CD8-positive, alpha-beta T cell (primary cell): ENCODE measurements at regions of chr2 and their contacts with region 1.

Region 1: GRCh38 chr2:152717228-152718075 is at the start of gene PRPF40A:
- DNase-seq: peak; percentile 97 to 99 (median 99)
- ATAC-seq: peak; percentile 79
- H3K4me3 ChIP-seq: peak within 1 kb of the TSS; percentile 85 to 95
- H3K4me3 Mint-ChIP-seq: peak within 1 kb of the TSS; percentile 100
- H3K27ac ChIP-seq: peak within 1 kb of the TSS; percentile 95 to 99
- H3K27ac Mint-ChIP-seq: peak within 1 kb of the TSS; percentile 100
- H3K4me1 ChIP-seq: peaks cover 22% of the 10 kb centered on the region
- H3K4me1 Mint-ChIP-seq: peaks cover 59% of the 10 kb centered on the region
- H3K27me3 ChIP-seq: no peaks in the 10 kb centered on the region
- H3K27me3 Mint-ChIP-seq: no peaks in the 10 kb centered on the region
- CTCF ChIP-seq: no peak
- total RNA-seq, gene PRPF40A: 164 to 180 TPM

Region 2: GRCh38 chr2:151409601-151410484 is 1307.6 kb before region 1 on chr2 and contains the start of gene RIF1:
- CTCF ChIA-PET with region 1: no interaction called
- POLR2A ChIA-PET with region 1: no interaction called
- intact Hi-C with region 1: loop called in 1 of 2 experiments (anchors 1 kb)
- DNase-seq: peak; percentile 46 to 84 (median 70)
- ATAC-seq: peak; percentile 87
- H3K4me3 ChIP-seq: peak within 1 kb of the TSS; percentile 76 to 80
- H3K4me3 Mint-ChIP-seq: peak within 1 kb of the TSS; percentile 98
- H3K27ac ChIP-seq: peak within 1 kb of the TSS; percentile 78 to 79
- H3K27ac Mint-ChIP-seq: peak within 1 kb of the TSS; percentile 98
- H3K4me1 ChIP-seq: peaks cover 12% of the 10 kb centered on the region
- H3K4me1 Mint-ChIP-seq: peaks cover 34% of the 10 kb centered on the region
- H3K27me3 ChIP-seq: no peaks in the 10 kb centered on the region
- H3K27me3 Mint-ChIP-seq: no peaks in the 10 kb centered on the region
- CTCF ChIP-seq: peak; percentile 56
- total RNA-seq, gene RIF1: 51.6 to 53.1 TPM

Region 3: GRCh38 chr2:151828143-151828889 is 889.1 kb before region 1 on chr2 and contains the start of gene ARL5A:
- CTCF ChIA-PET with region 1: no interaction called
- POLR2A ChIA-PET with region 1: interaction called, 3 read pairs
- intact Hi-C with region 1: loop called (anchors 2 to 5 kb)
- DNase-seq: peak; percentile 91 to 98 (median 94)
- ATAC-seq: peak; percentile 95
- H3K4me3 ChIP-seq: peak within 1 kb of the TSS; percentile 66 to 97
- H3K4me3 Mint-ChIP-seq: peak within 1 kb of the TSS; percentile 85
- H3K27ac ChIP-seq: peak within 1 kb of the TSS; percentile 22 to 80
- H3K27ac Mint-ChIP-seq: peak within 1 kb of the TSS; percentile 93
- H3K4me1 ChIP-seq: peaks cover 34% of the 10 kb centered on the region
- H3K4me1 Mint-ChIP-seq: peaks cover 53% of the 10 kb centered on the region
- H3K27me3 ChIP-seq: no peaks in the 10 kb centered on the region
- H3K27me3 Mint-ChIP-seq: no peaks in the 10 kb centered on the region
- CTCF ChIP-seq: no peak
- total RNA-seq, gene ARL5A: 18.8 to 24.1 TPM

Region 4: DNA sequence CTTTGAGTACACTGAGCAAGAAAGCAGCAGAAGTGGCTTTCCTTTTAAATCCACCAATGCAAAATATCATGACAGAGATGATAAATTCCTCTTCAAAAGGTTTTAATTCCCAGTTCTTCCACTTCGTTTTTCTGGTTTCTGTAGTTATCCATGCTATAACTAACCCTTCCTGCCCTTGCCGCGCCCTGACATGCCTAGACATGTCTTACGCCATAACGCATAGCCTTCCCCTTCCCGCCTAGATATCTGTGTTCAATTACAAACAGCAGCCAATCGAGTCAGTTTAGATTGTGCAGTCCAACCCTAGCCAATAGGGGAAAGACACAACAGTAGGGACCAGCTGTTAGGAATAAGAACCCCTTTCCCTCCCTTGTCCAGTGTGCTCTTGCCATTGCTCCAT is 16.3 kb before region 1 on chr2:
- CTCF ChIA-PET with region 1: interaction called, 3 read pairs
- POLR2A ChIA-PET with region 1: interaction called, 3 read pairs
- intact Hi-C with region 1: loop called (anchors 1 to 2 kb)
- DNase-seq: no peak
- ATAC-seq: no peak
- H3K4me3 ChIP-seq: no peak overlapping the region
- H3K4me3 Mint-ChIP-seq: no peak overlapping the region
- H3K27ac ChIP-seq: no peak overlapping the region
- H3K27ac Mint-ChIP-seq: no peak overlapping the region
- H3K4me1 ChIP-seq: peaks cover 6% of the 10 kb centered on the region
- H3K4me1 Mint-ChIP-seq: peaks cover 77% of the 10 kb centered on the region
- H3K27me3 ChIP-seq: no peaks in the 10 kb centered on the region
- H3K27me3 Mint-ChIP-seq: no peaks in the 10 kb centered on the region
- CTCF ChIP-seq: no peak

Region 5: GRCh38 chr2:152740743-152741328 is 23.4 kb after region 1 on chr2:
- CTCF ChIA-PET with region 1: no interaction called
- POLR2A ChIA-PET with region 1: interaction called, 5 read pairs
- intact Hi-C with region 1: loop called in 1 of 2 experiments (anchors 2 kb)
- DNase-seq: peak in 2 of 9 experiments; percentile 57 to 69
- ATAC-seq: peak; percentile 89
- H3K4me3 ChIP-seq: no peak overlapping the region
- H3K4me3 Mint-ChIP-seq: no peak overlapping the region
- H3K27ac ChIP-seq: no peak overlapping the region
- H3K27ac Mint-ChIP-seq: no peak overlapping the region
- H3K4me1 ChIP-seq: no peaks in the 10 kb centered on the region
- H3K4me1 Mint-ChIP-seq: peaks cover 2% of the 10 kb centered on the region
- H3K27me3 ChIP-seq: no peaks in the 10 kb centered on the region
- H3K27me3 Mint-ChIP-seq: no peaks in the 10 kb centered on the region
- CTCF ChIP-seq: peak; percentile 100

Region 6: GRCh38 chr2:152792974-152793373 is 75.5 kb after region 1 on chr2:
- CTCF ChIA-PET with region 1: no interaction called
- POLR2A ChIA-PET with region 1: no interaction called
- intact Hi-C with region 1: no loop called
- DNase-seq: no peak
- ATAC-seq: no peak
- H3K4me3 ChIP-seq: no peak overlapping the region
- H3K4me3 Mint-ChIP-seq: no peak overlapping the region
- H3K27ac ChIP-seq: no peak overlapping the region
- H3K27ac Mint-ChIP-seq: no peak overlapping the region
- H3K4me1 ChIP-seq: no peaks in the 10 kb centered on the region
- H3K4me1 Mint-ChIP-seq: no peaks in the 10 kb centered on the region
- H3K27me3 ChIP-seq: no peaks in the 10 kb centered on the region
- H3K27me3 Mint-ChIP-seq: no peaks in the 10 kb centered on the region
- CTCF ChIP-seq: no peak